ENCODE measurements at regions of chr11 and their contacts with region 1.

Region 1: GRCh38 chr11:65479184-65480145 is 19.4 kb upstream of the MALAT1 start:
- DNase-seq: peak; percentile 85

Region 2: GRCh38 chr11:65440831-65441499 is 38.5 kb before region 1 on chr11:
- intact Hi-C with region 1: no loop called
- DNase-seq: peak; percentile 60

Region 3: GRCh38 chr11:65491614-65492386 is 12.3 kb after region 1 on chr11:
- intact Hi-C with region 1: loop called in 1 of 2 experiments (anchors 2 kb)
- DNase-seq: peak; percentile 93